Common myeloid progenitor, CD34-positive (primary cell): ENCODE measurements at regions of chr3 and their contacts with region 1.

Region 1: DNA sequence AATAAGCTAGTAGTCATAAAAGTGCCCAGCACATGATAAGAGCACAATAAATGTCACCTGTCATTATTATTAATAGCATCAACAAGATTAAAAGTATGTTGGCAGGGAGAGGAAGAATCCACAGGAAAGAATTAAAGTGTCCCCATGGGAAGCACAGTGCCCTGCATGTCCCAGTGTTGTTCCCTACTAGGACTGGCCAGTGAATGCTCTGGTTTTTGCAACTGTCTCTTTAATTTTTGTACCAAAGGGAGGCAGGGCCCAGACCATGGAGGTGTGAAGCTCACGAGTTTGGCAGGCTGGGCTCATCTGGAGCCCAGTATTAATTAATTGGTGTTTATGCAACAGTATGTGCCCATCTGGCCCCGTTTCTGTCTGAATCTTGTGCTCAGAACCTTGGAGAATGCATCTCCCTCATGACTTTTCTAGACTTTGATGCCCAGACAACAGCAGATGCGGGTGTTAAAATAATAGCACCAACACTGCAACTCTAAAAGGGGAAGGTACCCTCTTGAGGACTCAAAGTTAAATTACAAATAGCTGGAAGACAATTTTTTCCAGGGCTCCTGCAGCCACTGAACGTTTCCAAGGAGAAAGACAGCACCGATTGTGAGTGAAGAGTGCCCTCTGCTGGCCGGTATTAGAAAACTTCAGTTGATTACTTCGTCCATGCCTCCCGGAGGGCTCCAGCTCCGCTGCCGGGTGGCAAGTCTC is 71.9 kb upstream of the SPATA12 start:
- DNase-seq: peak; percentile 70 to 79 (median 71)
- H3K4me3 ChIP-seq: no peak overlapping the region
- H3K27ac ChIP-seq: no peak overlapping the region
- H3K4me1 ChIP-seq: peaks cover 0 to 21% (median 12%) of the 10 kb centered on the region in 4 experiments
- H3K27me3 ChIP-seq: no peaks in the 10 kb centered on the region

Region 2: GRCh38 chr3:56693750-56694149 is 294.9 kb before region 1 on chr3:
- CTCF ChIA-PET with region 1: interaction called, 11 read pairs
- POLR2A ChIA-PET with region 1: no interaction called
- DNase-seq: peak; percentile 22 to 55 (median 48)
- H3K4me3 ChIP-seq: peak overlapping the region in 1 of 7 experiments; percentile 8
- H3K27ac ChIP-seq: no peak overlapping the region
- H3K4me1 ChIP-seq: peaks cover 0 to 35% (median 30%) of the 10 kb centered on the region in 4 experiments
- H3K27me3 ChIP-seq: no peaks in the 10 kb centered on the region

Region 3: DNA sequence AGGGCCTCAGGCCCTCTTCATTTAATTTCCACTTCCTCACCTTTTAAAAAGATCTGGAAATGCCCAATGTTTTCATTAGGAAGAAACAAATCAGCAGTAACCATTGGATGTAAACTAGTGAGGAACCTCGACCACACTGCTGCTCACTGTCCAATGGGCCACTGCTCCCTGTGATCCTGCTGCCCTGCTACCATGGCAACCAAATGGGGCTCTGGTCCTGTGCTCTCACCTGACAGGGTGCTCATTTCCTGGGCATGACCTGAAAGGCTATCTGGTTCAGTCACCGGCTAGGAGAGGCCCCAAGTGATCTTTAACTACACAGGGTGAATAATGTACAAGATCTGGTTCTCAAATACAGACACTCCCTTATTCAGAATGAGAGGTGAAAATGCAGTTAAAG is 241.5 kb before region 1 on chr3:
- CTCF ChIA-PET with region 1: interaction called, 13 read pairs
- POLR2A ChIA-PET with region 1: no interaction called
- DNase-seq: no peak
- H3K4me3 ChIP-seq: no peak overlapping the region
- H3K27ac ChIP-seq: peak overlapping the region in 1 of 2 experiments; percentile 29
- H3K4me1 ChIP-seq: peaks cover 0 to 25% (median 11%) of the 10 kb centered on the region in 4 experiments
- H3K27me3 ChIP-seq: no peaks in the 10 kb centered on the region

Region 4: GRCh38 chr3:56855856-56856512 is 132.6 kb before region 1 on chr3:
- CTCF ChIA-PET with region 1: interaction called, 15 read pairs
- POLR2A ChIA-PET with region 1: no interaction called
- DNase-seq: peak; percentile 21 to 48 (median 36)
- H3K4me3 ChIP-seq: no peak overlapping the region
- H3K27ac ChIP-seq: no peak overlapping the region
- H3K4me1 ChIP-seq: peaks cover 0 to 21% (median 4%) of the 10 kb centered on the region in 4 experiments
- H3K27me3 ChIP-seq: no peaks in the 10 kb centered on the region

Region 5: GRCh38 chr3:56923521-56924224 is 64.9 kb before region 1 on chr3:
- CTCF ChIA-PET with region 1: interaction called, 11 read pairs
- POLR2A ChIA-PET with region 1: no interaction called
- DNase-seq: peak; percentile 67 to 84 (median 73)
- H3K4me3 ChIP-seq: peak overlapping the region in 3 of 7 experiments; percentile 7 to 36 (median 12)
- H3K27ac ChIP-seq: peak overlapping the region; percentile 51 to 77
- H3K4me1 ChIP-seq: peaks cover 17 to 50% (median 32%) of the 10 kb centered on the region in 4 experiments
- H3K27me3 ChIP-seq: no peaks in the 10 kb centered on the region

Region 6: GRCh38 chr3:57007513-57008460 is 19.2 kb after region 1 on chr3:
- CTCF ChIA-PET with region 1: interaction called, 12 read pairs
- POLR2A ChIA-PET with region 1: no interaction called
- DNase-seq: peak in 2 of 3 donors; percentile 64 to 71
- H3K4me3 ChIP-seq: peak overlapping the region in 1 of 7 experiments; percentile 2
- H3K27ac ChIP-seq: peak overlapping the region in 1 of 2 experiments; percentile 64
- H3K4me1 ChIP-seq: peaks cover 0 to 22% (median 19%) of the 10 kb centered on the region in 4 experiments
- H3K27me3 ChIP-seq: no peaks in the 10 kb centered on the region